OCI-LY7 (cell line): ENCODE measurements at regions of chr10 and their contacts with region 1.

Region 1: GRCh38 chr10:93254180-93254853 is 180.6 kb downstream of the CYP26A1 start:
- DNase-seq: no peak
- H3K4me3 ChIP-seq: no peak overlapping the region
- H3K27ac ChIP-seq: no peak overlapping the region
- H3K4me1 ChIP-seq: no peaks in the 10 kb centered on the region
- CTCF ChIP-seq: no peak

Region 2: GRCh38 chr10:93147291-93147690 is 107.0 kb before region 1 on chr10:
- CTCF ChIA-PET with region 1: no interaction called
- POLR2A ChIA-PET with region 1: interaction called, 10 read pairs
- intact Hi-C with region 1: no loop called
- DNase-seq: no peak
- H3K4me3 ChIP-seq: no peak overlapping the region
- H3K27ac ChIP-seq: no peak overlapping the region
- H3K4me1 ChIP-seq: no peaks in the 10 kb centered on the region
- CTCF ChIP-seq: no peak

Region 3: GRCh38 chr10:93224005-93224779 is 30.1 kb before region 1 on chr10:
- CTCF ChIA-PET with region 1: no interaction called
- POLR2A ChIA-PET with region 1: no interaction called
- intact Hi-C with region 1: no loop called
- DNase-seq: no peak
- H3K4me3 ChIP-seq: no peak overlapping the region
- H3K27ac ChIP-seq: no peak overlapping the region
- H3K4me1 ChIP-seq: no peaks in the 10 kb centered on the region
- CTCF ChIP-seq: peak; percentile 61